Pancreas (tissue), 10 donors: ENCODE measurements at regions of chr1 and their contacts with region 1.

Region 1: DNA sequence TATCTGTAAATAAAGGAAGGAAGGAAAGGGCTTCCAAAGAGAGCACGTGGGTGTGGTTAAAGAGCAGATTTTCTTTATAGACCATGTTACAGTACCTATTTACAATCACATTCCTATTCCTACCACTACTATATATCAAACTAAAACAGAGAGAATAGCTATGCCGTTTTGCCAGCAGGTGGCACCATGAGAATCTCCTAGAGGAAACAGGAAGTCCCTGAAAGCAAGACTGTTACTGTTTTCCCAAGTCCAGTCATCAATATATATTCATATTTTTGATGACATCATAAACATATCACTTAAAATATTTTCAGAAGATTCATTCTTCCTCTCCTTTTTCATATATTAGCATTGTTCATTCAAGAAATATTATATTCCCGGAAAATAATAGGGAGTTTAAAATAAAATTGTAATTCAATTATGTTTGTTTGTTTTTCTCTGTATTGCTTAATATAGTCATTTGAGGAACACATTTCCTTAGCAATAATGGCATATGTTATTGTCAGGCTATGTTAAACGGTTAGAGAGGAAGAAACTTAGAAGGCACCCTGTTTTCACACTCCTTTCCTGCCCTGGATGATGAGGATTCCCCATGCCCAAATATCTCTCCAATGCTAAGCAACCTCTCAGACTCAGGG is 6.6 kb downstream of the CCDC190 start:
- DNase-seq: peak in 4 of 6 donors; percentile 45 to 69 (median 48)
- ATAC-seq: peak; percentile 74 to 95 (median 92)
- H3K4me3 ChIP-seq: no peak overlapping the region
- H3K27ac ChIP-seq: no peak overlapping the region
- H3K4me1 ChIP-seq: no peaks in the 10 kb centered on the region
- H3K27me3 ChIP-seq: no peaks in the 10 kb centered on the region
- CTCF ChIP-seq: peak; percentile 39 to 53 (median 46)

Region 2: DNA sequence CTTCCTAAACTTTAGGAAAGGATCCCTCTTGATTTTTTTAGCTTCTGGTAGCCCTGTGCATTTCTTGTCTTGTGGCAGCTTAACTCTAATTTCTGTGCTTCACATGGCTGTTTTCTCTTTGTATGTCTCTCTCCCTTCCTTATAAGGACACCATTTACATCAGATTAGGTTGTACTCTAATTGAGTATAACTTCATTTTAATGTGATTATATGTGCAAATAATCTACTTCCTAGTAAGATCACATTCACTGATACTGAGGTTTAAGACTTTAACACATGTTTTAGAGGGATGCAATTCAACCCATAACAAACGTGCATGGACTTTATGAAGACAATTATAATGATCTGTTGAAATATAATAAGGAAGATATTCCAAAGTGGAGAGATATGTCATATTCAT is 261.5 kb after region 1 on chr1:
- intact Hi-C with region 1: no loop called
- DNase-seq: no peak
- ATAC-seq: no peak
- H3K4me3 ChIP-seq: no peak overlapping the region
- H3K27ac ChIP-seq: no peak overlapping the region
- H3K4me1 ChIP-seq: no peaks in the 10 kb centered on the region
- H3K27me3 ChIP-seq: no peaks in the 10 kb centered on the region
- CTCF ChIP-seq: no peak

Region 3: DNA sequence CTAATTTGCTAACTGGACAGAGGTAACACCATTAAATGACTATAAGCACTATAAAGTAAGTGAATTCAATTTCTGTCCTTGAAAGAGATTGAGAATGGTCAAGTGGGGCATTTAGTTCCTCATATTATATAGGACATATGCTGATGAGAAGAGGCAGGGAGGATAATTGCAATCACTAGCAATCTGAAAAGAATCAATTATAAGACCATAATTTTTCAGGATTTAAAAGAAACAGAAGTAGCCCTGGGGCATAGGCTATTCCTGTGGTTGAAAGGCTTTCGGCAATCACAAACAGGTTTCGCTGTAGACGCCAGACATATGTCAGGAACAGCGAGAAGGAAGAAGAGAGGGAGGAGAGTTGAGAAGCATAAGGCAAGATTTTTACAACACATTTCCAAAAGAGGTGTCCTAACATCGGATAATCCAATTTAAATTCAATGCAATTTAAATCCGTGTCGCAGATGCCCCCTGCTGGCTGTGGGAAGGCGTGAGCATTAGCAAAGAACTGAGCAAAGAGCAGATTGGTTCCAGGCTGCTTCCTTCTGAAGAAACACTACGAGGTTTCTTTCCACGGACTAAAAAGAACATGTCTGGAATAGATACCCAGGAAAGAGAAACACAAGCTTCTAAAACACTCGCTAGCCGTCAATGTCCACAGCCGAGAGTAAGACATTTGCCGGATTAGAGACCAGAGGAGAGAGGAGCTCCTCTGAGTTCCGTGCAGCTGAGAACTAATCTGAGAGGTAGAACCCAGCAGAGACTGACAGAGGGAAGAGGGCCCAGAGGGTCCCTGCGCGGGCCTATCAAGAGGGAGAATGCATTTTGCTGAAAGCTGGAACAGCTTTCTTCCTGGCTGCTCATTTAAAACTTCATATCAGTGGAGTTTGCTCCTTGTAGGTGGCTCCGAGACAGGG is 320.4 kb after region 1 on chr1:
- intact Hi-C with region 1: loop called in 1 of 3 experiments (anchors 10 kb)
- DNase-seq: peak in 5 of 6 donors; percentile 25 to 78 (median 41)
- ATAC-seq: peak in 3 of 4 donors; percentile 81 to 82 (median 81)
- H3K4me3 ChIP-seq: no peak overlapping the region
- H3K27ac ChIP-seq: no peak overlapping the region
- H3K4me1 ChIP-seq: no peaks in the 10 kb centered on the region
- H3K27me3 ChIP-seq: no peaks in the 10 kb centered on the region
- CTCF ChIP-seq: peak; percentile 36 to 71 (median 68)

Region 4: GRCh38 chr1:163307479-163308171 is 453.3 kb after region 1 on chr1:
- intact Hi-C with region 1: loop called in 2 of 3 experiments (anchors 10 kb)
- DNase-seq: no peak
- ATAC-seq: no peak
- H3K4me3 ChIP-seq: no peak overlapping the region
- H3K27ac ChIP-seq: no peak overlapping the region
- H3K4me1 ChIP-seq: no peaks in the 10 kb centered on the region
- H3K27me3 ChIP-seq: no peaks in the 10 kb centered on the region
- CTCF ChIP-seq: no peak

Region 5: DNA sequence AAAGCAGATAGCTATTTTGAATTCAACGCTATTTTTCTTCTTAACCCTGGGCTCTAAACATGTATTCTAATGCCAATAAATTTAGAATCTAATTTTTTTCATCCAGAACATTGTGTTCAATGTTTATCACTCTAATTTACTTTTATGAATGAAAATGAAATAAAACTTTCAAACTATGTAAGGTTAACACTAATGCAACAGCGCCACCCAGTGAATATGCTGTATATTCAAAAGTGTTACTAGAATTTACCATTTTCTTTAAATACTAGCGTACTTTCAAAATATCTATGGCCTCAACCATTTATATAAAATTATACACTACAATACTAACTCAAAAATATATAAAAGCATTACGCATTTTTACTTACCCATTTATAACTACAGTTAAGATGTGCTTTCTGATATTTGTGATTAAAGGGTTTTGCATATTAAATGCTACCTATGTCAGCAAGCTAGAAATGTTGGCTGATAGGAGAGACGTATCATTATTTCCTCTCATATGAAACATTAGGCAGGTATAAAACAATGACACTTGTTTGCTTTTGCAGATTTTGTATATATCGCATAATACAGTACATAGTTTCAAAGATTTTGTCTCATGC is 461.5 kb after region 1 on chr1:
- intact Hi-C with region 1: loop called in 1 of 3 experiments (anchors 10 kb)
- DNase-seq: peak in 1 of 6 donors; percentile 26
- ATAC-seq: no peak
- H3K4me3 ChIP-seq: no peak overlapping the region
- H3K27ac ChIP-seq: no peak overlapping the region
- H3K4me1 ChIP-seq: peaks cover 0 to 5% (median 0%) of the 10 kb centered on the region in 3 donors
- H3K27me3 ChIP-seq: no peaks in the 10 kb centered on the region
- CTCF ChIP-seq: peak; percentile 16 to 50 (median 40)

Region 6: GRCh38 chr1:163650624-163651023 is 796.3 kb after region 1 on chr1:
- intact Hi-C with region 1: no loop called
- DNase-seq: no peak
- ATAC-seq: no peak
- H3K4me3 ChIP-seq: no peak overlapping the region
- H3K27ac ChIP-seq: no peak overlapping the region
- H3K4me1 ChIP-seq: no peaks in the 10 kb centered on the region
- H3K27me3 ChIP-seq: no peaks in the 10 kb centered on the region
- CTCF ChIP-seq: no peak